MCF 10A (cell line): ENCODE measurements at regions of chr2 and their contacts with region 1.

Region 1: DNA sequence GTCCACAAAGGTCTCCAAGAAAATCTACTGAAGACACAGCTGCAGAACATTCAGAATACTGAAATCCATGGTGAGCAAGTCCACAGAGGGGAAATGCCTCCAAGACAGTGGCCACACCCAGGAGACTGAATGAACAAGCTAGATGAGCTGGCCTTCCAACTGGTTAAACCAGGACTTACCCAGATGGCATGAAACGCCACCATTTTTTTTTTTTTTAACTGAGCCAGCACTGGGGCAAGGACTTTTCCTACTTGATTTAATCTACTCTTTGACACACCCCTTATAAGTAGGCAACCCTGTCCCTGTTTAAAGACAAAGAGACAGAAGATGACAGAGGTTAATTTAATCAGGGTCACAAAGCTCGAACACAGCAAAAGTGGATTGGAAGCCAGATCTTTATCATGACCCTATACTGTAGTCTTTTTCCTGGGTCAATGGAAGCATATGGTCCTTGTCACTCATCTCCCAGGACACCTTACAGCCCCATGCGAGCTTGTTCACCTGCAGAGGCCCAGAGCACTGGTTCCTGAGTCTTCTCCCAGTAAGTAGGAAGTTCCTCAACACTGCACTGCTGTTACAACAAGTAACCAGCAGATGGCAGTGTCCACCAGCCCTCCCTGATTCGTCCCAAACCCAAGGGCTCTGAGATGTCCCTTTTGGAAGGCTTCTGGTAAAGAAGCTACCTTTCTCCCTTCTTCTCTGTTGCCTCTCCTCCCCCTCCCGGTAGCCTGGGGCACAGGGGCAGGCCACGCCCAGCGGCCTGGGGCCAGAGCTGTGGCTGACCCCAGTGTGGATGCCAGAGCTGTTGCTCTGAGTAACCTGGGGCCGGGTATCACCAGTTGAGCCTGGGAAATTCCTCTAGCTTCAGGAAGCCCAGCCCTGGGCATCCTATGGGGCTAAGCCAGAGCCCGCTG is 5.6 kb upstream of the GDF7 start:
- DNase-seq: peak; percentile 82
- H3K4me3 Mint-ChIP-seq: no peak overlapping the region
- H3K27ac Mint-ChIP-seq: no peak overlapping the region
- H3K4me1 Mint-ChIP-seq: peaks cover 7% of the 10 kb centered on the region
- H3K27me3 Mint-ChIP-seq: peaks cover 45% of the 10 kb centered on the region
- CTCF ChIP-seq: peak; percentile 96

Region 2: DNA sequence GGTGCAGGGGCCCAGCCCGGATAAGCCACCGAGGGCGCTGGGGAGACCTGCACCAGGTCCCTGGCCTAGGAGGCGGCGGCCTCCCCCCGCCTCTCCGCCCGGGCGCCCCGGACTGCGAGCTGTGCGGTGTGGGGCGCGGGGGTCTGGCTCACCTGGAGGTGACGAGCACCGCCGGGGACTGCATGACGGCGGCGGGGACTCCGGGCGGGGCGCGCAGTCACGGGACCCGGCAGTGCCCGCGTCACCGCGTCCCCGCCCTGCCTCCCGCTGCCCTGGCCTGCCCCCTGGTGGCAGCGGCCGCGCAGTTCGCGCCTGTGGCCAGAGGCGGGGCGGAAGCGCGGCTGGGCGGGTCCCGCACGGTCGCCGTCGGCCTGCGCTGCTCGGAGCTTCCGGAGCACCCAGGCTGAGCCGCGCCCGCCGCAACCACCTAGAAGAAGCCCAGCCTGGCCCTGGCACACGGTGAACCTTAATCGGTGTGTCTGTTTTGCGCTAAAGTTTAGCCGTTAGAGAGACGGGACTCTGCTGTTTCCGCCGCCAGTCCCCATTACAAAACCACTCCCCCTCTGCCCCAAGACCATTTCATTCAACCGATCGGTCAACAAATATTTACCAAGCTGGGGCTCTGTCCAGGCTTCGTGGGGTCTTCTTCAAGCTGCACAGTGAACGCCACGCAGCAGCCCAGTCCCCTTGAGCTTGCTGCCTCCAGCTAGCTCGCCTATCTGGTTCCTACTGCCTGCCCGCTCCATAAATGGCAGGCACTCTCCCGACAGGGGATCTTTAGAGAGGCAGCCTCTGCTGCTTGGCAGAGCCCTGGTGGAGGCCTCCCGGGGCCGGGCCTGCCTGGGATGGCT is 10.2 kb before region 1 on chr2 and contains the start of gene HS1BP3:
- CTCF ChIA-PET with region 1: interaction called, 45 read pairs
- POLR2A ChIA-PET with region 1: interaction called, 6 read pairs
- intact Hi-C with region 1: no loop called
- DNase-seq: peak; percentile 81
- H3K4me3 Mint-ChIP-seq: peak within 1 kb of the TSS; percentile 82
- H3K27ac Mint-ChIP-seq: peak within 1 kb of the TSS; percentile 62
- H3K4me1 Mint-ChIP-seq: peaks cover 22% of the 10 kb centered on the region
- H3K27me3 Mint-ChIP-seq: peaks cover 12% of the 10 kb centered on the region
- CTCF ChIP-seq: peak; percentile 89
- total RNA-seq, gene HS1BP3: 10.0 and 25.1 TPM in 2 replicates

Region 3: DNA sequence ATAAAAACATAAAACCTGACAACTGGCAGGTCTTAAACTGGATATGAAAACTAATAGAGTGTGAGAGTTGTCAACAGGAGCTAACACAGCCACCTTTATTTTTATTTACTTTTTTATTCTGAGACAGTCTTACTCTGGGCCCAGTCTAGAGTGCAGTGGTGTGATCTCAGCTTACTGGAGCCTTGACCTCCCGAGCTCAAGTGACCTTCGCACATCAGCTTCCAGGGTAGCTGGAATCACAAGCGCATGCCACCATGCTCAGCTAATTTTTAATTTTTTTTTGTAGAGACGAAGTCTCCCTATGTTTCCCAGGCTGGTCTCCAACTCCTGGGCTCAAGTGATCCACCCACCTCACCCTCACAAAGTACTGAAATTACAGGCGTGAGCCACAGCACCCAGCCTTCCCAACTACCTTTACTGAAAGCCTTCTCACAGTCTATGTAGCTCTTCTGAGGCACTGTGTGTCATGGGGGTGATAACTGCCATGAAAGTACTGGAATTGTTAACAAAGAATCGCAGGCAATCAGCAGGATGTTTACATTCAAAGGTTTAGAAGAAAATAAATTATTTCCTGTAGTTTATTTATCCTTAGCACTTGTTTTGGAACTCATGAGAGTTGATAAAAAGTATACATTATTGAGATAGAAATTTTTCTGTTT is 29.9 kb after region 1 on chr2:
- CTCF ChIA-PET with region 1: interaction called, 12 read pairs
- POLR2A ChIA-PET with region 1: no interaction called
- intact Hi-C with region 1: no loop called
- DNase-seq: no peak
- H3K4me3 Mint-ChIP-seq: no peak overlapping the region
- H3K27ac Mint-ChIP-seq: no peak overlapping the region
- H3K4me1 Mint-ChIP-seq: no peaks in the 10 kb centered on the region
- H3K27me3 Mint-ChIP-seq: no peaks in the 10 kb centered on the region
- CTCF ChIP-seq: no peak

Region 4: GRCh38 chr2:20771299-20771698 is 110.0 kb after region 1 on chr2:
- CTCF ChIA-PET with region 1: interaction called, 10 read pairs
- POLR2A ChIA-PET with region 1: no interaction called
- intact Hi-C with region 1: no loop called
- DNase-seq: no peak
- H3K4me3 Mint-ChIP-seq: no peak overlapping the region
- H3K27ac Mint-ChIP-seq: no peak overlapping the region
- H3K4me1 Mint-ChIP-seq: no peaks in the 10 kb centered on the region
- H3K27me3 Mint-ChIP-seq: no peaks in the 10 kb centered on the region
- CTCF ChIP-seq: no peak

Region 5: GRCh38 chr2:20962939-20963557 is 301.7 kb after region 1 on chr2:
- CTCF ChIA-PET with region 1: interaction called, 132 read pairs
- POLR2A ChIA-PET with region 1: interaction called, 4 read pairs
- intact Hi-C with region 1: loop called (anchors 1 kb)
- DNase-seq: peak; percentile 73
- H3K4me3 Mint-ChIP-seq: no peak overlapping the region
- H3K27ac Mint-ChIP-seq: no peak overlapping the region
- H3K4me1 Mint-ChIP-seq: no peaks in the 10 kb centered on the region
- H3K27me3 Mint-ChIP-seq: peaks cover 46% of the 10 kb centered on the region
- CTCF ChIP-seq: peak; percentile 79

Region 6: DNA sequence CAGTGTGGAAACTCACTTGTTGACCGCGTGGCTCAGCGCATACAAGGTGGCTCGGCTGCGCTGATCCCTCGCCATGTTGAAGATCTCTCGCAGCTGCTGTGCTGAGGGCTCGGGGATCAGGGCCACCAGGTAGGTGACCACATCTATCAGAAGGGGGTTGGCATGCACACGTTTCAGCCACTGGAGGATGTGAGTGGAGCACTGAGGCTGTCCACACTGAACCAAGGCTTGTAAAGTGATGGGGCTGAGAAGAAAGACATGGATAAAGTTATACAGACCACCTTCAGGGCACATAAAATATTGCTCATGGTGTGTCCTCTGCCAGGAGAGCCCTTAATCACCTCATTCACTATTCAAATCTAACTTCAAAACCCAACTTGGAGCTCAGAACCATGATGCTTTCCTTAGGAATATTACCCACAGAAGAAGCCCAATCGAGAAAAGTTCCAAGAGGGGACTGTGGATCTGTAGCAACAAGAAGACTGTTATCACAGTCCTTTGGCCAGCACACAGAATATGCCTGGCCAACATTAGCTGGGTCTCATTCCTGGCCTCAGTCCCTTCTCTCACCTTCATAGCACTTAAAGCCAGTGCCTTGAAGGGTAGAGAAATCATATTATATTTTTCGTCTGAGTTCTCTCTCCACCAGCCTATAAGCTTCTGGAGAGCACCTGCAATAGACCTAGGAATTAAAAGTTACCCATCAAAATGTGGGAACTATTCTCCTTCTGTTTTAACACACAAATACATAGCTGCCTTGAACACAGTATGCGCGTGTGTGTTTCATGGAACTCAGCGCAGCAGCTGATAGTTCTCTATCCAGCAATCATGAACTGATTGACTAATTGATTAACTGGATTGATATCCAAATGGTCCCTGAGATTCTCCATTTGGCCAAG is 371.3 kb after region 1 on chr2:
- CTCF ChIA-PET with region 1: interaction called, 38 read pairs
- POLR2A ChIA-PET with region 1: no interaction called
- intact Hi-C with region 1: loop called (anchors 1 kb)
- DNase-seq: no peak
- H3K4me3 Mint-ChIP-seq: no peak overlapping the region
- H3K27ac Mint-ChIP-seq: no peak overlapping the region
- H3K4me1 Mint-ChIP-seq: no peaks in the 10 kb centered on the region
- H3K27me3 Mint-ChIP-seq: peaks cover 17% of the 10 kb centered on the region
- CTCF ChIP-seq: no peak